Activated CD4-positive, alpha-beta memory T cell treated with anti-CD3 and anti-CD28 coated beads for 36 hours (primary cell): ENCODE measurements at regions of chr6 and their contacts with region 1.

Region 1: DNA sequence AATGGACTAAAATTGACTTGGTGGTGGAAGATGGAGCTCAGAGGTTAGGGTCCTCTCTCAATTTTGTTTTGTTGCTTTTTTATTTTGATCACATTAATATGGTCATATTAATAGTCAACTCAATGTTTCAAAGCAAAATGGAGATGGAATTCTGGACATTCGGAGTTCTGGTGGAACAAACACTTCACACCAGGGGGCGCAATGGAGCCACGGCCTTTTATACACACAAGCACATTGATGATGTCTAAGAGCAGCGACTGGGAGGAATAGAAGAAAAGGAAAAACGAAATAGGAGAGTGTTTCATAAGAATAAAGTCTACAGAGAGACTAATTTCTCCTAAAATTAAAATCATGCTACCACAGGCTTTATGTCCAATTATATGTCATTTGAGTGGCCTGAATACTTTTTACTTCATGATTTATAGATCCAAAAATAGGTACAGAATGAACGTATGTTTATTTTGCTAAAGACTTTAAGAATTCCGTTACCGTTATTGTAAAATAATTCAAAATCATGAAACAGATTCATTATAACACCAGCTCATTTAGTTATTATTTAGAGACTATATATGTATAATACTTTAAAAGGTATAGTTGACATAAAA is 197.6 kb upstream of the SASH1 start:
- DNase-seq: peak; percentile 78
- H3K4me3 Mint-ChIP-seq: no peak overlapping the region
- H3K27ac Mint-ChIP-seq: no peak overlapping the region
- H3K4me1 Mint-ChIP-seq: peaks cover 15% of the 10 kb centered on the region
- H3K27me3 Mint-ChIP-seq: peaks cover 5% of the 10 kb centered on the region

Region 2: GRCh38 chr6:147202516-147203312 is 942.3 kb before region 1 on chr6:
- CTCF ChIA-PET with region 1: no interaction called
- POLR2A ChIA-PET with region 1: no interaction called
- intact Hi-C with region 1: loop called (anchors 10 kb)
- DNase-seq: peak; percentile 87
- H3K4me3 Mint-ChIP-seq: peak overlapping the region; percentile 81
- H3K27ac Mint-ChIP-seq: peak overlapping the region; percentile 96
- H3K4me1 Mint-ChIP-seq: peaks cover 21% of the 10 kb centered on the region
- H3K27me3 Mint-ChIP-seq: no peaks in the 10 kb centered on the region

Region 3: DNA sequence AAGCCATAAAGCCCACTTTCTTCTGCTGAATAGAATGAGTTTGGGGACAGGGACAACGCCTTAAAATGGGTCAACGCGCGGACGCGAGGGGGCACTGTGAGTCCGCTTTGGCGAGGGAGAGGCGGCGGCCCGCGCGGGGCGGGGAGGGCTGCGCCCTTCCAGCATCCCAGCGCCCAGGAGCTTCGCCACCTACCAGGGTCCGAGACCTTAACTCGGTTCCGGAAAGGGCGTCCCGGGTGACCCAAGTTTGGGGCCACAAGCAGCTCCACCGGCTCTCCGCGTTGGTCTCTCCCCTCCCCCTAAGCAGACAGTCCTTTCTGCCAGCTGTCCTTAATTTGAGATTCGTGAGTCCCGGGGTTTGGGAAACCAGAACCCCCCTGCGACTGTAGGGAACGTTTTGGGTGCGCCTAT is 638.3 kb before region 1 on chr6:
- CTCF ChIA-PET with region 1: interaction called, 3 read pairs
- POLR2A ChIA-PET with region 1: no interaction called
- intact Hi-C with region 1: loop called (anchors 2 kb)
- DNase-seq: peak; percentile 71
- H3K4me3 Mint-ChIP-seq: no peak overlapping the region
- H3K27ac Mint-ChIP-seq: no peak overlapping the region
- H3K4me1 Mint-ChIP-seq: peaks cover 17% of the 10 kb centered on the region
- H3K27me3 Mint-ChIP-seq: peaks cover 55% of the 10 kb centered on the region

Region 4: GRCh38 chr6:148166339-148166968 is 21.4 kb after region 1 on chr6:
- CTCF ChIA-PET with region 1: interaction called, 32 read pairs
- POLR2A ChIA-PET with region 1: no interaction called
- intact Hi-C with region 1: loop called (anchors 1 kb)
- DNase-seq: no peak
- H3K4me3 Mint-ChIP-seq: no peak overlapping the region
- H3K27ac Mint-ChIP-seq: no peak overlapping the region
- H3K4me1 Mint-ChIP-seq: peaks cover 5% of the 10 kb centered on the region
- H3K27me3 Mint-ChIP-seq: peaks cover 6% of the 10 kb centered on the region

Region 5: DNA sequence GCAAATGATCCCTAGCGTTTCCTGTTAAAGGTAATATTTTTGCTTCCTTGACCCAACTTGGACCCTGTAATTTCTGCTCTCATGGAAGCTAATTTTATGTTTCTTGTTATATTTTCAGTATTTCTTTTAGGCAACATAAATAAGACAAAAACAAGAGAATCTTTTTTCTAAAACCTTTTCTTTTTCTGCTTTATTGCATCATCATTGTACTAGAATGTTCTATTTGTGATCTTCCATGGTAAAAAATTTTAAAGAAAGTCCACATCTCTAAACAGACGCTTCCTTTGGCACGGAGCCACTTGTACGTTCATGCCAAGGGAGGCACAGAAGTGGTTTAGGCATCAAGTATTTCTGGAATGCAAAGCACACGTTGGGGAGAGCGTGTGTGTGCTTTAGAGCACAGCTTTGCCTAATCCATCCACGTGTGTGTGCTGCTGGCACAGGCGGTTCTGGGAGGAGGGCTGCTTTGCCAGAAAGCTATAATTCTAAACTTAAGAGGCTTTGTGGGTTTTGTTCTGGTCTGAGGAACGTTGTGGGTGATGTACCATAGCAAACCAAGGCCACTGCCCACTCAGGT is 295.9 kb after region 1 on chr6:
- CTCF ChIA-PET with region 1: no interaction called
- POLR2A ChIA-PET with region 1: no interaction called
- intact Hi-C with region 1: loop called (anchors 5 kb)
- DNase-seq: no peak
- H3K4me3 Mint-ChIP-seq: no peak overlapping the region
- H3K27ac Mint-ChIP-seq: no peak overlapping the region
- H3K4me1 Mint-ChIP-seq: peaks cover 9% of the 10 kb centered on the region
- H3K27me3 Mint-ChIP-seq: peaks cover 12% of the 10 kb centered on the region

Region 6: DNA sequence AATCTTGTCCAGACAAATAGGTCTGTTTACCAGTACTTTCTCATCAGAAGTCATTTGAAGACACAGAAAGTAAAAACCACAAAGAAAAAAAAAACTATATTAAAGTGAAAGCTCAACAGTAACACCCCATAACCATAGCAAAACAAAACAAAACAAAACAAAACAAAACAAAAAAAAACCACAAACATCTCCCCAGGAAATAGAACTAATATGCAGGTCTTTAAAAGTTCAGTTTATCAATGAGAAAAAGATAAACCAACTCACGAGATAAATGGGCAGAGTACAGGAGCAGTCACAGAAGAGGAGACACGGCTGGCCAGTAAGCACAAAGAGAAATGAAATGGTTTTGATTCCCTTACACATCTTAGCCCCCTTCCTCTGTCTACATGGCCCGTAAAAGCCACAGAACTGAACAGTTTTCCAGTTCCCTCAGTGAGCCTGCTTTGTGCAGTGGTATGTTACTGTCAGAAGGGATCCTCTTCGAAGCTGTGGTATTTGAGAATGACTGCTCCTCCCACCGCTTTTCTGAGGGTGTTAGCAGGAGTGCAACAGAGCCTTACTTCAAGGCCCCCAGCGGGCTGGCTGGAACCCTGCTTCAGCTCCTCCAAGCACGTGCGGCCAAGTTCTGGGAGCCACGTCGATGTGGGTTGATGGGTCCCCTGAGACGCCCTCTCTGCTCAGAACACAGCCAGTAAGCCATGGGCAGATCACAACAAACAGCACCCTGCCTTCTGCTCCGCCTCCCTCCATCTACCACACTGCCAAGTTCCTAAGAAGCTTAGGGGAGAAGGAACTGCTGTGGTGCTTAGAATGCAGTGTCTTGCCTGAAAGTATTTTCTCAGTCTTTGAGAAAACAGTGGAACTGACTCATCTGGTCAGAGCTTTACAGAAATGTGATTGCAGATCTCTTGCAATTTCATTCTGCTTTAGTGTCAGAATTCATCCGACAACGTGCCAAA is 615.8 kb after region 1 on chr6:
- CTCF ChIA-PET with region 1: no interaction called
- POLR2A ChIA-PET with region 1: no interaction called
- intact Hi-C with region 1: loop called (anchors 5 kb)
- DNase-seq: peak; percentile 75
- H3K4me3 Mint-ChIP-seq: peak overlapping the region; percentile 65
- H3K27ac Mint-ChIP-seq: peak overlapping the region; percentile 88
- H3K4me1 Mint-ChIP-seq: peaks cover 73% of the 10 kb centered on the region
- H3K27me3 Mint-ChIP-seq: peaks cover 8% of the 10 kb centered on the region